ENCODE measurements at regions of chr5 and their contacts with region 1.

Region 1: DNA sequence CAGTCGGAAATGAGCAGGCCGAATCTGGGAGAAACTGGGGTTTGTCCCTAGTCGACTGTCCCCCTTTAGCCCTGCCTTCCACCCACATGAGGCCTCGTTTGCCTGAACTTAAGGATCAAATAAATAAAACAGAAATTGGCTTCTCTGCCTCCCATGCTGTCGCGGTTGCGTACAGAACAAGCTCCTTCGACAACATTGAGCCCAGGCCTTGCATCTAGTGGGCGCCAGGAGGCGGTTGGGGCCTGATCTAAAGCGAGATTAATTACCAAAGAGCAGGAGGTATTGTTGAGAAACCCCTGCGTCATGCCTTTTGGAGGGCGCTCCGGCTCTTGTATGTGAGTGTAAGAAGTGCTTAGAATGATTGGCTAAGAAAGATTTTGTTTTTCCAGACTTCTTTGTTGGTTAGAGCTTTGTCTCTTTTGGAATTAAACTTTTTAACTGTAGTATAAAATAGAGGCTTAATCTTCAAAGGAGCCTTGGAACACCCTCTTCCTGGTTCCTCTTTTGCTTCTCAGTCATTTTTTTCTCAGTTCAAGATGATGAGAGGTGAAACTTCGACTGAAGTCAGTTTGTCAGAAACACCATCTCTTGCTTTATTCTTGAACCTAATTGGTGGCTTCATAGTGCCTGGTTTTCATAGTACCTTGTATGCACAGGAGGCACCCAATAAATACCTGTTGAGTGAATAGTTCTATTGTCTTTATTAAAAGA is 827 bp downstream of the ATP6V0E1 start:
- DNase-seq: peak; percentile 52
- H3K4me3 ChIP-seq: peak overlapping the region; percentile 99
- CTCF ChIP-seq: peak; percentile 74

Region 2: DNA sequence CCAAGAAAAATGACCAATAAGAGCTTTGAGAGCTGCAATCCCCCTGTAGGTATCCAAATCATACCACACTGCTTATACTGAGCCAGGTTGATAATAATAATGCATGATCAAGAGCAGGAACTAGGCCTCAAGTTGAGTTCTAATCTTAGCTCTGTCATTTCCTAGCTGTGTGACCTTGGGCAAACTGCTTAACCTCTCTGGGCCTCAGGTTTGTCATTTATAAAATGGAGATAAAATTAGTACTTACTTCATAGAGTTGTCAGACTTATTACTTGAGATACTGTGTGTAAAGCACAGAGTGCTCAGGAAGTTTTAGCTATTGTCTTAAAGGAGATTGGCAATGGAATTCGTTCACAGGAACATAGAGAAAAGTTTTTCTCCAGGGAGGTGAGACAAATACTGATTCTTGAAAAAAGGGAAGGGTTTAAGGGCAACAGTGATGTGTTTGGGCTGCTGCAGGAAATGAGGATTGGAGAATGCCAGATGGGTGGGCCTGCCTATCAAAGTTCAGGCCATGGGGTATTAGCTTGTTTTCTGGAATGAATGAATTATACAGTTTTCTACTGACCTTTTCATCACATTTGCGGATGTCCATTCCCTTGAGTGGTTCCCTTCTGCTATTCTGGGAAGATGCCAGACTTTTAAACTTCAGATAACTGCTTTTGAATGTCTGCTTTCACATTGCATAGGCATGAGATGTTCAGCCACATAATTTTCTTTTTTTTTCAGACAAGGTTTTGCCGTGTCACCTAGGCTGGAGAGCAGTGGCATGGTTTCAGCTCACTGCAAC is 11.1 kb before region 1 on chr5:
- CTCF ChIA-PET with region 1: interaction called, 62 read pairs
- POLR2A ChIA-PET with region 1: interaction called, 8 read pairs
- DNase-seq: no peak
- H3K4me3 ChIP-seq: no peak overlapping the region
- CTCF ChIP-seq: no peak

Region 3: GRCh38 chr5:172994405-172994804 is 10.0 kb after region 1 on chr5:
- CTCF ChIA-PET with region 1: interaction called, 17 read pairs
- POLR2A ChIA-PET with region 1: interaction called, 4 read pairs
- DNase-seq: no peak
- H3K4me3 ChIP-seq: no peak overlapping the region
- CTCF ChIP-seq: no peak

Region 4: GRCh38 chr5:173057062-173057924 is 72.9 kb after region 1 on chr5:
- CTCF ChIA-PET with region 1: interaction called, 15 read pairs
- POLR2A ChIA-PET with region 1: interaction called, 8 read pairs
- DNase-seq: peak; percentile 87
- H3K4me3 ChIP-seq: peak overlapping the region; percentile 85
- CTCF ChIP-seq: peak; percentile 31

Region 5: GRCh38 chr5:173123416-173123815 is 139.0 kb after region 1 on chr5:
- CTCF ChIA-PET with region 1: no interaction called
- POLR2A ChIA-PET with region 1: no interaction called
- DNase-seq: peak; percentile 31
- H3K4me3 ChIP-seq: no peak overlapping the region
- CTCF ChIP-seq: no peak

Region 6: DNA sequence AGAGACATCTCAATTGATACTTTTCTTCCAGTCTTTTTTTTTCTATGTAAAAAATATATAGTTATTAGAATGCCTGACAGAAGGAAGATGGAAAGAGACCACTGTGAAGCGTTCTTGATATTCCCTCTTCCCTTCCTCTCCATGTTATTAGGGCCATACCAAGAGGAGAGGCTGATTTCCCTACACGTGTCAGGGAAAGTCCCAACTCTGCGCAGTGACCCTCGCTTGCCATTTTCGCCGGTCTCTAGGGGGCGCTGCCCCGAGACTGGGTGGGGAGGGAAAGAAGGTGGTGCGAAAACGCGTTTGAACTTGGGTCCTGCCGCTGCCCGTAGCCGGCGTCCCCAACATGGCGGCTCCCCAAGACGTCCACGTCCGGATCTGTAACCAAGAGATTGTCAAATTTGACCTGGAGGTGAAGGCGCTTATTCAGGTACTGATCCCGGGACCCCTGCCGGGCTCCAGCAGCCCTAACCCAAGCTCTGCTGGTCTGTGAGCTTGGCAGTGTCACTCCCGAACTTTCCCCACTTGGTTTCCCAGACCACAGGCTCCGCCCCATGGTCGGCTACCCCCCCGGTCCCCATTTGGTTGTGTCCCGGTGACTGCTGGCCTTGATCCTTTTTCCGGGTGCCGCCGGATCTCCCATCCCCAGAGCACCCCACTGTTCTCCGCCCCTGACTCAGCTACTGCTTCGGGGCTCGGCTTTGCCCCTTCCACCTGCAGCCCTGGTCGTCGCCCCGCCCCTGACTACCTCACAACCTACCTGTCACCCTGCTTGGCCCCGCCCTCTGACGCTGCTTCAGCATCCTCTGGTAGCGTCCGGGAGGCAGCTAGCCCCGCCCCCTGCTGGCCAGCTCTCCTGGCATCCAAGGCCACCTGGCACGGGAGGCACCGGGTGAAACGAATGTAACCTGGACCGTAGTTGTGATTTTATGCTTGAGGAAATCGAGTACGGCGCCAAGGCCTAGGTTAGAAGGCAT is 160.1 kb after region 1 on chr5 and contains the start of gene BNIP1:
- CTCF ChIA-PET with region 1: interaction called, 27 read pairs
- POLR2A ChIA-PET with region 1: no interaction called
- DNase-seq: peak; percentile 71
- H3K4me3 ChIP-seq: peak within 1 kb of the TSS; percentile 100
- CTCF ChIP-seq: peak; percentile 99

Region 7: GRCh38 chr5:173163219-173163618 is 178.8 kb after region 1 on chr5:
- CTCF ChIA-PET with region 1: interaction called, 21 read pairs
- POLR2A ChIA-PET with region 1: no interaction called
- DNase-seq: no peak
- H3K4me3 ChIP-seq: no peak overlapping the region
- CTCF ChIP-seq: no peak

Region 8: DNA sequence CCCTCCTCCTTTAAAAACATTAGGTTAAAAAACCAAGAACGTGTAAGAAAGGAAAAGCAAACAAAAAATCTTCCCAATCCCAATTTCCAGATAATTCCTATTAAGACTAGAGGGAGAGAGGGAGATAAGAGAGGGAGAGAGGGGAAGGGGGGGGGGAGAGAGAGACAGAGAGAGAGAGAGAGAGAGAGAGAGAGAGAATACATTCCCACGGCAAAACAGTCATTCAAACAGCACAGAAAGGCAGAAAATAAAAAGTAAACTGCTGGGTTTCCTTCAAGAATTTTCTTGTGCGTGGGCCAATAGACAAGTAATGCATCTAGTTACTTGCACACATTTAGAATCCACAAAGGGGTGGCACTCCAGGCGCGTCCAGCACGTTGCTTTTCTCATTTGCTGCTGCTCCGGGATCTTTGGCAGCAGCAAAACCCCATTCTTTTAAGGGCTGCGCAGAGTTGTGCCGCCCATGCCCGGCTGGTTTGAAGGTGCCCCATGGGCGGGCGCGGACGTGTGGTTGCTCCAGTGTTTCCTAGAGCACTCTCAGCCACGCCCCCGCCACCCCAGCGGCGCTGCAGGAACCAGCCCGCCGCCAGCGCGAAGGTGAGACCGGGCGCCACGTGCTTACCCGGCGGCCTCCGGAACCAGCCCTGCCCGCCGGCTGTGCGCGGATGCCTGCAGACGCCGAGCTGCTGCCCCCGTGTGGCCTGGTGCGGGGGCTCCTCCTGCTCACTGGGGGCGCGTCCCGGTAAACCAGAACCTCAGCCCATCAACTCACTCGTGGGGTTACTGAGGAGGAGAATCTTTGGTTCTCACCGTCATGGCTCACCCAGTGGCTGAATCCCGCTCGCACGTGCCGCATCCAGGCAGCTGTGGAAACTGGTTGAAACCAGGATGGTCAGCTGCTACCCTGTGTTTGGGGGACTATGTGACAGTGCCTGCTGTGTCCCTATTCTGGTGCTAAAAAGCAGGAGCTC is 299.2 kb after region 1 on chr5:
- CTCF ChIA-PET with region 1: interaction called, 25 read pairs
- POLR2A ChIA-PET with region 1: no interaction called
- DNase-seq: no peak
- H3K4me3 ChIP-seq: peak overlapping the region; percentile 42
- CTCF ChIP-seq: peak; percentile 94